ENCODE measurements at regions of chr13 and their contacts with region 1.

Region 1: DNA sequence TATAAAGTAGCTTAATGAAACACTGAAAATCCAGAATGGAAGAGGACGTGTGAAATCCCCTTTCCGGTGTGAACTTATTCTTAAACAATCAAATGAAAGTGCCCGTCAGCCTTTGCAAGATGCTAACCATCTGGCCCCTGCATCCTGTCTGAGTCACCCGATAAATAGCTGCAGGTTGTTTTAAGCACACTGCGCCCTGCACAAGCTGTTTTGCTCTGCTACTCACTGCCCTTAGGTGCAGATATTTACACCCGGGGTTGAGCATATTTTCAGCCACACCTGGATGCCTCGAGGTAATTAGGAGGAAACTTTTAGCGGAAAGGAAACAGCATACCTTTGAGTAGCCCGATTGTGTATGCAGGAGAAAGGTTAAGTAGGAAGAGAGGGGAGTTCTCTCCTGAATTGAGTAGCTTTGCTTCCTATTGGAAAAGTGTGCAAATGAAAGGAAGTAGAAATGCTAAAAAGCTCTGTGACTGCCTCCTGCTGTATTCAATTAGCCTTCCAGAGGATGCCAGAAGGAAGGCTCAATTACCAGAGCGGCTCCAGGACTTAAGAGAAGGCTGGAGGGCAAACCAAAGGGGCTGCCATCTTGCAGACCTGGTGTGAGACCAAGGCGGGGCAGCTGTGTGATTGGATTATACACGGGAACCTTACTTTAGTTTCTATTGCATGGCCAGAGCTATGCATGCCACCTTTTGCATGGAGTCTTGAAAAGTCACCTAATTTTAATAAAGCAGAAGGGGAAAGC is 42.5 kb downstream of the IRS2 start:
- DNase-seq: peak; percentile 79
- H3K4me3 ChIP-seq: peak overlapping the region in 1 of 2 experiments; percentile 24; a peak in 2 of 4 replicates
- H3K27ac ChIP-seq: peak overlapping the region in 1 of 2 experiments; percentile 98; a peak in 2 of 4 replicates
- H3K4me1 ChIP-seq: peaks cover 12 to 35% of the 10 kb centered on the region in 2 experiments
- H3K27me3 ChIP-seq: no peaks in the 10 kb centered on the region
- CTCF ChIP-seq: no peak
- EP300 ChIP-seq: peak; percentile 66 to 87
- RAD21 ChIP-seq: peak; percentile 32

Region 2: GRCh38 chr13:109764470-109765291 is 20.8 kb after region 1 on chr13:
- CTCF ChIA-PET with region 1: interaction called, 10 read pairs
- POLR2A ChIA-PET with region 1: interaction called, 4 read pairs
- DNase-seq: peak; percentile 64
- H3K4me3 ChIP-seq: no peak overlapping the region
- H3K27ac ChIP-seq: peak overlapping the region in 1 of 2 experiments; percentile 65; a peak in 2 of 4 replicates
- H3K4me1 ChIP-seq: peaks cover 36 to 69% of the 10 kb centered on the region in 2 experiments; a peak in 3 of 4 replicates
- H3K27me3 ChIP-seq: no peaks in the 10 kb centered on the region
- CTCF ChIP-seq: peak; percentile 32; the same call in 1 of the 2 replicates
- EP300 ChIP-seq: no peak
- RAD21 ChIP-seq: peak; percentile 47

Region 3: GRCh38 chr13:109790951-109791605 is 47.2 kb after region 1 on chr13:
- CTCF ChIA-PET with region 1: no interaction called
- POLR2A ChIA-PET with region 1: no interaction called
- DNase-seq: peak; percentile 69
- H3K4me3 ChIP-seq: peak overlapping the region in 1 of 2 experiments; percentile 12; a peak in 1 of 4 replicates
- H3K27ac ChIP-seq: peak overlapping the region in 1 of 2 experiments; percentile 85; a peak in 2 of 4 replicates
- H3K4me1 ChIP-seq: peaks cover 6 to 27% of the 10 kb centered on the region in 2 experiments; a peak in 3 of 4 replicates
- H3K27me3 ChIP-seq: no peaks in the 10 kb centered on the region
- CTCF ChIP-seq: peak; percentile 61
- EP300 ChIP-seq: 0 out of 4 replicates have a peak, but pooled peaks of 1 of the 2 experiments have one; percentile 23
- RAD21 ChIP-seq: peak; percentile 84